Caki2 (cell line): ENCODE measurements at regions of chr12 and their contacts with region 1.

Region 1: GRCh38 chr12:52980693-52981423 is 25.4 kb upstream of the EIF4B start:
- DNase-seq: peak; percentile 94

Region 2: GRCh38 chr12:52879394-52880351 is 101.2 kb before region 1 on chr12:
- in situ Hi-C with region 1: loop called (anchors 25 kb)
- DNase-seq: peak; percentile 91